ENCODE measurements at regions of chr14 and their contacts with region 1.

Region 1: DNA sequence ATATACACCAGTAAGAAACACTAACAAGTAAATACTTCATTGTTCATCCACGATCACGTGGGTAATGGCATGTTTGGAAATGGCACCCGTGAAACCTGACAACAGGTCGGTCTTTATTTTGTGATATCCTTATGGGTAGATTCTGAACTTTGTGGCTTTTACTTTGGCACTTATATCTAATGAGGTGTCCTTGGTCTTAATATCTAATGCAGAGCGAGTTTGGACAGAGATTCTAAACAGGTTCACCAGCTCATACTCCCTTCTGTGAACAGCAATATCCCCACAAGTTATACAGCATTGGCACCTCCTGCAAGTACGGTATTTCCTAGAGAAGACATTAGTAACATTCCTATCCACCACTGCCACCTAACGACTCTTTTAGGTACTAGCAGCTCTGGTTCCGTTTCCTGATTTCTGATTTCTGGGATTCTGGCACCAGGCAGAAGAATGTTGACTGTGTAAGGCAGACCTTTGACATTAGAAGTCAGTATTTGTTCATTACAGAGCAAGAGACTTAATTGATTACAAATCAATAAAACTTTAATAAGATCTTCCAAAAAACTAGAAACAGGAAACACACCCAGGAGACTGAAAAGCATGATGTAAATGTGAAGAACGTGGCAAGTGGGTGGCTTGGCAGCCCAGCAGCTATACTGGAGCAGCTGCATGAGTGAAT is 2.4 kb downstream of the ANG start:
- DNase-seq: peak in 8 of 9 experiments; percentile 4 to 83 (median 38)
- ATAC-seq: peak; percentile 99
- H3K4me3 ChIP-seq: no peak overlapping the region
- H3K4me3 Mint-ChIP-seq: no peak overlapping the region
- H3K27ac ChIP-seq: no peak overlapping the region
- H3K27ac Mint-ChIP-seq: no peak overlapping the region
- H3K4me1 ChIP-seq: no peaks in the 10 kb centered on the region
- H3K4me1 Mint-ChIP-seq: peaks cover 3% of the 10 kb centered on the region
- H3K27me3 ChIP-seq: no peaks in the 10 kb centered on the region
- H3K27me3 Mint-ChIP-seq: no peaks in the 10 kb centered on the region
- CTCF ChIP-seq: peak; percentile 98

Region 2: GRCh38 chr14:20530771-20531571 is 160.0 kb before region 1 on chr14:
- CTCF ChIA-PET with region 1: interaction called, 7 read pairs
- POLR2A ChIA-PET with region 1: no interaction called
- intact Hi-C with region 1: loop called (anchors 1 kb)
- DNase-seq: peak; percentile 37 to 83 (median 72)
- ATAC-seq: peak; percentile 76
- H3K4me3 ChIP-seq: no peak overlapping the region
- H3K4me3 Mint-ChIP-seq: peak overlapping the region; percentile 48
- H3K27ac ChIP-seq: no peak overlapping the region
- H3K27ac Mint-ChIP-seq: no peak overlapping the region
- H3K4me1 ChIP-seq: no peaks in the 10 kb centered on the region
- H3K4me1 Mint-ChIP-seq: peaks cover 7% of the 10 kb centered on the region
- H3K27me3 ChIP-seq: peaks cover 0 to 2% of the 10 kb centered on the region in 2 experiments
- H3K27me3 Mint-ChIP-seq: peaks cover 8% of the 10 kb centered on the region
- CTCF ChIP-seq: peak; percentile 79

Region 3: GRCh38 chr14:20645481-20645880 is 45.5 kb before region 1 on chr14:
- CTCF ChIA-PET with region 1: interaction called, 10 read pairs
- POLR2A ChIA-PET with region 1: no interaction called
- intact Hi-C with region 1: no loop called
- DNase-seq: no peak
- ATAC-seq: no peak
- H3K4me3 ChIP-seq: no peak overlapping the region
- H3K4me3 Mint-ChIP-seq: no peak overlapping the region
- H3K27ac ChIP-seq: no peak overlapping the region
- H3K27ac Mint-ChIP-seq: no peak overlapping the region
- H3K4me1 ChIP-seq: no peaks in the 10 kb centered on the region
- H3K4me1 Mint-ChIP-seq: no peaks in the 10 kb centered on the region
- H3K27me3 ChIP-seq: peaks cover 0 to 3% of the 10 kb centered on the region in 2 experiments
- H3K27me3 Mint-ChIP-seq: peaks cover 37% of the 10 kb centered on the region
- CTCF ChIP-seq: no peak

Region 4: DNA sequence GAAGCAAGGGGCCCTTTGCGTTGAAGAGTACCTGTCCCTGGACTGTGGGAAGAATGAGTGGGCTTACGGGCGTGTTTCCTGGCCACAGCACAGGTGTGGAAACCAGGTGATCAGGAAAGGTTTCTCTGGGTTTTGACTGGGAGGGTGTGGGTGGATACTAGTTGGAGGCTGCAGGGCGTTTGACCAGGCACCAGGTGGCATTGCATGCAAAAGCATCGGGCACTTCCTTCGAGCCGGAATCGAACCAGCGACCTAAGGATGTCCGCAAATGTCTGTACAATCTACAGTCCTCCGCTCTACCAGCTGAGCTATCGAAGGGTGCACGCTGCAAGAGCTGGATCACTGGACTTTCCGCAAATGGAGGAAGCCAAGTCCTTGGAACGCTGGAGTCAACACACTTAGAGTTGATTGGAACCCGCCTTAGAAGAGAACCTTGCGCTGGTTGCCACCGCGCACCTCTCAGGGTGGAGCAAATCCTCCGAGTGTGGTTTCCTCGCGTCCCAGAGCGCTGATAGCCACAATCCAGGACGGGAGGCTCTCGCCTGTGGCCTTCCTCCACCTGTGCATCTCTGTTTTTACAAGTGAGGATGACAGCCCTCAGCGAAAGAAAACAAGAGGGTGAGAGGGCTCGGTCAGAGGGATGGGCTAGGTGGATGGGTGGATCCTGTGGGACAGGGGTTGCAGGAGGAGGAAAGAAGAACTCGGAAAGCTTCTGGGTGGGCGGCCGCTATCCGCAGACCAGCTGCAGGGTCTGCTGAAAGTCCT is 27.8 kb before region 1 on chr14:
- CTCF ChIA-PET with region 1: interaction called, 188 read pairs
- POLR2A ChIA-PET with region 1: interaction called, 5 read pairs
- intact Hi-C with region 1: loop called (anchors 1 kb)
- DNase-seq: peak; percentile 57 to 89 (median 73)
- ATAC-seq: peak; percentile 90
- H3K4me3 ChIP-seq: peak overlapping the region; percentile 34 to 50
- H3K4me3 Mint-ChIP-seq: peak overlapping the region; percentile 77
- H3K27ac ChIP-seq: no peak overlapping the region
- H3K27ac Mint-ChIP-seq: no peak overlapping the region
- H3K4me1 ChIP-seq: peaks cover 14% of the 10 kb centered on the region
- H3K4me1 Mint-ChIP-seq: peaks cover 27% of the 10 kb centered on the region
- H3K27me3 ChIP-seq: no peaks in the 10 kb centered on the region
- H3K27me3 Mint-ChIP-seq: peaks cover 30% of the 10 kb centered on the region
- CTCF ChIP-seq: peak; percentile 54

Measured in CD8-positive, alpha-beta T cell (primary cell).